Activated CD4-positive, alpha-beta T cell treated with anti-CD3 and anti-CD28 coated beads for 36 hours (primary cell): ENCODE measurements at regions of chr2 and their contacts with region 1.

Region 1: GRCh38 chr2:101998896-101999789 is 7.4 kb downstream of the IL1R2 start:
- DNase-seq: peak; percentile 69
- ATAC-seq: peak; percentile 70
- H3K4me3 Mint-ChIP-seq: peak overlapping the region; percentile 64
- H3K27ac Mint-ChIP-seq: peak overlapping the region; percentile 90
- H3K4me1 Mint-ChIP-seq: peaks cover 40% of the 10 kb centered on the region
- H3K27me3 Mint-ChIP-seq: peaks cover 3% of the 10 kb centered on the region

Region 2: GRCh38 chr2:101717071-101717845 is 281.9 kb before region 1 on chr2:
- CTCF ChIA-PET with region 1: no interaction called
- POLR2A ChIA-PET with region 1: no interaction called
- intact Hi-C with region 1: loop called (anchors 1 to 5 kb)
- DNase-seq: peak; percentile 71
- ATAC-seq: peak; percentile 50
- H3K4me3 Mint-ChIP-seq: peak overlapping the region; percentile 9
- H3K27ac Mint-ChIP-seq: peak overlapping the region; percentile 92
- H3K4me1 Mint-ChIP-seq: peaks cover 90% of the 10 kb centered on the region
- H3K27me3 Mint-ChIP-seq: no peaks in the 10 kb centered on the region

Region 3: GRCh38 chr2:101759162-101759561 is 240.0 kb before region 1 on chr2:
- CTCF ChIA-PET with region 1: no interaction called
- POLR2A ChIA-PET with region 1: no interaction called
- intact Hi-C with region 1: no loop called
- DNase-seq: no peak
- ATAC-seq: no peak
- H3K4me3 Mint-ChIP-seq: no peak overlapping the region
- H3K27ac Mint-ChIP-seq: no peak overlapping the region
- H3K4me1 Mint-ChIP-seq: peaks cover 73% of the 10 kb centered on the region
- H3K27me3 Mint-ChIP-seq: no peaks in the 10 kb centered on the region

Region 4: GRCh38 chr2:101900375-101900774 is 98.8 kb before region 1 on chr2:
- CTCF ChIA-PET with region 1: interaction called, 5 read pairs
- POLR2A ChIA-PET with region 1: interaction called, 3 read pairs
- intact Hi-C with region 1: loop called (anchors 1 kb)
- DNase-seq: peak; percentile 82
- ATAC-seq: peak; percentile 93
- H3K4me3 Mint-ChIP-seq: peak overlapping the region; percentile 24
- H3K27ac Mint-ChIP-seq: peak overlapping the region; percentile 90
- H3K4me1 Mint-ChIP-seq: peaks cover 38% of the 10 kb centered on the region
- H3K27me3 Mint-ChIP-seq: peaks cover 10% of the 10 kb centered on the region

Region 5: GRCh38 chr2:102082571-102083392 is 83.6 kb after region 1 on chr2:
- CTCF ChIA-PET with region 1: interaction called, 4 read pairs
- POLR2A ChIA-PET with region 1: interaction called, 5 read pairs
- intact Hi-C with region 1: loop called (anchors 1 kb)
- DNase-seq: peak; percentile 74
- ATAC-seq: peak; percentile 90
- H3K4me3 Mint-ChIP-seq: peak overlapping the region; percentile 50
- H3K27ac Mint-ChIP-seq: peak overlapping the region; percentile 93
- H3K4me1 Mint-ChIP-seq: peaks cover 74% of the 10 kb centered on the region
- H3K27me3 Mint-ChIP-seq: no peaks in the 10 kb centered on the region

Region 6: GRCh38 chr2:102235491-102235890 is 236.3 kb after region 1 on chr2:
- CTCF ChIA-PET with region 1: interaction called, 68 read pairs
- POLR2A ChIA-PET with region 1: interaction called, 13 read pairs
- intact Hi-C with region 1: no loop called
- DNase-seq: peak; percentile 54
- ATAC-seq: no peak
- H3K4me3 Mint-ChIP-seq: no peak overlapping the region
- H3K27ac Mint-ChIP-seq: peak overlapping the region; percentile 12
- H3K4me1 Mint-ChIP-seq: peaks cover 65% of the 10 kb centered on the region
- H3K27me3 Mint-ChIP-seq: no peaks in the 10 kb centered on the region

Region 7: GRCh38 chr2:102366406-102367112 is 367.4 kb after region 1 on chr2:
- CTCF ChIA-PET with region 1: no interaction called
- POLR2A ChIA-PET with region 1: interaction called, 3 read pairs
- intact Hi-C with region 1: loop called (anchors 1 to 2 kb)
- DNase-seq: peak; percentile 35
- ATAC-seq: peak; percentile 54
- H3K4me3 Mint-ChIP-seq: peak overlapping the region; percentile 55
- H3K27ac Mint-ChIP-seq: peak overlapping the region; percentile 93
- H3K4me1 Mint-ChIP-seq: peaks cover 73% of the 10 kb centered on the region
- H3K27me3 Mint-ChIP-seq: no peaks in the 10 kb centered on the region

Region 8: DNA sequence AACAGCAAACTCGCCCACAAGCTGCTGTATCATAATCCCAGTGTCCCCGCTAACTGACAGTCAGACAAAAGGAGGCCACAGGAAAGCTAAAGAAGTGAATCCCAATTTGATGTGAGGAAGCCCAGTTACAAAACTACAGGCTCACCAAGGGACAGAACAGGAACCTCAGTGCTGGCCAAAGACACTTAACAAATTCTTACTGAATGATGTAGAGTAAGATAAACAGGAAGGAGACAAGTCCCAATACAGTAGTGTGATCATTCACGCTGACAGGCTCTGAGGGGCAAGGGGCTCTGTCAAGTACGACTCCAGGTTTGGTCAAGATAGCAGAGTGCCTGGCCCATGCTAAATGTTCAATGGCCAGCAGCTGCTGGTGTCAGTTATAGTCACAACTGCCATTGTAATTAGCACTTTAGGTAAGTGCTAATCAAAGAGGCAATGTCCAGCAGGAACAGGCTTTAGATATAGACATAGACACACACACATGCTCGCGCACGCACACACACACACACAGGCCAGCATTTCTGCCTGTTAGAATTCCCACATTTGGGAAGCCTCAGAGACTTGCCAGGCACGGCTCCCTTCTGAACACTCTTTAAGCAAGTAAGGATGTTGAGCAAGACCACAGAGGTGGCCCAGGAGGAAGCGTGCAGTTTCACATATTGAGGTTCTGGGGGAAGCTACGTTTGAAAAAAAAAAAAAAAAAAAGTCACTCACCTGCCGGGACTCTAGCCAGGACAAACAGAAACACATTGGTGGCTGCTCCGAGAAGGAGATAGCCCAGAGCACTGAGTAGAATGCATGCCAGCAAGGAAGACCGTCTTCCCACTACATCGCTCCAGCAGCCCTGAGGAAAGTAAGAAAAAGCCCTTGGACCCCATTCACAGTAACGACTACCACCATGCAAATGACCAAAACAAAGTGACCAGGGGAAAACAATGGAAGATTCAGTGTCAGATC is 727.3 kb after region 1 on chr2:
- CTCF ChIA-PET with region 1: no interaction called
- POLR2A ChIA-PET with region 1: no interaction called
- intact Hi-C with region 1: no loop called
- DNase-seq: no peak
- ATAC-seq: no peak
- H3K4me3 Mint-ChIP-seq: no peak overlapping the region
- H3K27ac Mint-ChIP-seq: no peak overlapping the region
- H3K4me1 Mint-ChIP-seq: peaks cover 1% of the 10 kb centered on the region
- H3K27me3 Mint-ChIP-seq: no peaks in the 10 kb centered on the region